Thyroid gland (tissue), 4 donors: ENCODE measurements at regions of chrX and their contacts with region 1.

Region 1: DNA sequence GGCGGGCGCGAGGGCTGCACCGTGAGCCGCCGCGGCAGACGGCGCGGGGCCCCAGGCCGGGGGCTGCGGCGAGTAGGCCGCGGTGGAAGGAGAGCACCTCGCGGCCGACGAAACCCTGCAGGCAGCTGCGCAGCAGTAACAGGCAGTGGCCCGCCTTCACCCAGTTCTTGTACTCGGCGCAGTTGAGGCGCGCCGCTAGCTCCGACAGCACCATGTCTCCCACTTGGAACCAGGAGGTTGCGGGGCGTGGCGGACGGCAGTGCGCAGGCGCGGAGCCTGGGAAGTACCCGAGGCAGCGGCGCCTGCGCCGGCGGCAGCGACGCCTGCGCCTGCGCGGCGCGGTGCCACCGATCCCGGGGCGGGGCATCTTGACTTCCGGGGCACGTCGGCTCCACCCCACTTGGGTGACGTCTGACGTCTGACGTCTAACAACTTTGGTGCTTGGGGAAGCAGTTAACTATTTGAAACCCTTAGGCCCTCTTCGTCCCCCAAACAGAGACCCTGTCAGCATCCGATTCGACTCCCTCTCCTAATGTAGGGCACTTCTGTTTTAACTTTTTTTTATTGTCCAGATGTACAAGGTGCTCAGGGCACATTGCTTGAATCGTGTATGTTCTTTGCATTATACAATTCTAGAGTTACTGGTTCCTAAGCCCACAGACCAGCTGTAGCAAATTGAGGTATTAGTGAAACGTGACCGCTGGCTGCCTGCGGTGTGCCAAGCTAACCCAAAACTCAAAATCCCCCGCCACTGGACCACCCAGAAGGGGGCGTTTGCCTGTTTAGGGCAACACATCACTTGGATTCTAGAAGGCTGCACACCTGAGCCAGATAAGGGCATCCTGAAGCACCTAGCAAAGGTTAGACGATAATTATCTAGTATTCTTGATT is at the start of gene CXorf38:
- DNase-seq: peak; percentile 88 to 89
- H3K4me3 ChIP-seq: peak within 1 kb of the TSS in 2 of 3 donors; percentile 66 to 79
- H3K27ac ChIP-seq: peak within 1 kb of the TSS; percentile 74 to 91 (median 80)
- H3K4me1 ChIP-seq: peaks cover 11 to 20% of the 10 kb centered on the region in 2 donors
- H3K27me3 ChIP-seq: no peaks in the 10 kb centered on the region
- CTCF ChIP-seq: no peak
- POLR2A ChIP-seq: peak; percentile 52 to 79
- total RNA-seq, gene CXorf38: 29.7 to 49.1 (median 42.2) TPM

Region 2: DNA sequence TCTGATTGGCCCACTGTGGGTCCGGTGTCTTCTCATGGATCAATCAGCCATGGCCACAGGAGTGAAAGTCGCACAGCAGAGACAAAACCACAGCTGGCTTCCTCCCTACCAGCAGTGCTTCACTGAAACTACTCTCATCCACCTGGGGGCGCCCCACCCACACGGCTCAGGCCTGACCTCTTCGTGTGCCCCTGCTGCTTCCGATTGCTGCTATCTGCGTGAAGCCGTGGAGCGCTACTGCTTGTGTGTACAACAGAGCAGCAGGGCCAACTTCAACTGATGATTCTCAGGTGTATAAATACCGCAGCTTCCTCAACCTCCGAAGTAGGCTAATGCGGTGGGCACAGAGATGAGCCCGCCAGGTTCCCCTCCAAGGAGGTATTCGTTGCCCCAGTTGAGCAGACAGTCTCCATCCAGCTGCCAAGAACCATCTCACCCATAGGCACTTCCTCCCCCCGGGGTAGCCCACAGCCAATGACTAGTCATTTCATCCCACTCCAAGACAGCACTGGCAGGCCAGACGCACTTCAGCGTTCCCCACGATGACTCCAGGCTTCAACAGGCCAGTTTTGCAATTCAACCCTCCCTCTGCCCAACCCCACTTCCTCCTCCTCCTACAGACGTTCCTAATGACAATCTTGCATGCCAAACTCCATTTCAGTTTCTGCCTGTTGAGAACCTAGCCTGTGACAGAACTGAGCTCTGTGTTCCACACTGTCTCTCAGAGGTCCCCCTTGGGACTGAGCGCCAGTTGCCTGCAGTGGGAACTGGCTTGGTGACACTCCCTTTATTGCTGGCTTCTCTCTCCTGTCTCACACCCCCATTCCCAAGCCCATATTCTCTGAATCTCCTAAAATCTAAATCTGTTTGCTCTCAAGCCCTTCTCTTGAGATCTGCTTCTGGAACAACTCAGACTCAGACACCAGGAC is 108.1 kb before region 1 on chrX:
- intact Hi-C with region 1: loop called (anchors 10 kb)
- DNase-seq: peak; percentile 78 to 82
- H3K4me3 ChIP-seq: no peak overlapping the region
- H3K27ac ChIP-seq: peak overlapping the region; percentile 41 to 81 (median 51)
- H3K4me1 ChIP-seq: peaks cover 11% of the 10 kb centered on the region in 2 donors
- H3K27me3 ChIP-seq: no peaks in the 10 kb centered on the region
- CTCF ChIP-seq: peak in 2 of 6 experiments; percentile 15 to 17
- POLR2A ChIP-seq: peak in 1 of 2 donors; percentile 15

Region 3: DNA sequence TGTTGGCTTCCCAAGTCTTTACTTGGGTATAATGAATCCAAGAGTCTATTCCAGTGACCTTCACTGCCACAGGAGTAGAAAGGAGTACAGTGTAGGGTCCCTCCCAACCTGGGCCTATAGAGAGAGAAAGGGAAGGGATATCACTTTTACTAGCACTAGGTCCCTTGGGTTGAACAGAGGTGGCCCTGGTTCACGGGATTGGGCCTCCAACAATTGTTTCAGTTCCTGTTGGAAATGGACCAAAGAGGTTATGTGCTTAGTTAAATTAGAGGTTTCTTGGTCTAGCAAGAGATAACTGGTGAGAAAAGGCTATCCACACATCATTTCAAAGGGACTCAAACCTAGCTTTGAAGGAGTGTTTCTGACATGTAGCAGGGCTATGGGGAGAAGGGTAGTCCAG is 144.9 kb after region 1 on chrX:
- intact Hi-C with region 1: loop called (anchors 10 kb)
- DNase-seq: no peak
- H3K4me3 ChIP-seq: no peak overlapping the region
- H3K27ac ChIP-seq: no peak overlapping the region
- H3K4me1 ChIP-seq: peaks cover 0 to 5% of the 10 kb centered on the region in 2 donors
- H3K27me3 ChIP-seq: no peaks in the 10 kb centered on the region
- CTCF ChIP-seq: no peak
- POLR2A ChIP-seq: no peak

Region 4: GRCh38 chrX:41116948-41117347 is 469.4 kb after region 1 on chrX:
- intact Hi-C with region 1: loop called (anchors 10 kb)
- DNase-seq: no peak
- H3K4me3 ChIP-seq: no peak overlapping the region
- H3K27ac ChIP-seq: no peak overlapping the region
- H3K4me1 ChIP-seq: peaks cover 5 to 11% of the 10 kb centered on the region in 2 donors
- H3K27me3 ChIP-seq: no peaks in the 10 kb centered on the region
- CTCF ChIP-seq: no peak
- POLR2A ChIP-seq: no peak

Region 5: DNA sequence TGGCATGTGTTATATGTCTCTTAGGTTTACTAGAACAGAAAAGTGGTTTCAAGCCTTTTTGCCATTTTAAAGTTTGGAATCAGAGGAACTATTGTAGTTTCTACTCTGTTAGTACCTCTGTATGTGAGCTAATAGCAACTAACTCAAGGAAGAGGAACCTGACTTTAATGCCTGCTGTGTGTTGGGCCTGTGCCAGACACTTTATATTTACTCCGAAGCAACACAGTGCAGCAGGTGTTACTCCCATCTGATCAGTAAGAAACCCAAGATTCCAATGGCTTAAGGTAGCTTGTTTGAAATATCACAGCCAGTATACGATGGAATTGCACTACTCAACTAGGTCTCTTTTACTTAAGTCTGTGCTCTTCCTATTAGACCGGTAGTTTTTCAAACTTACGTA is 516.9 kb after region 1 on chrX:
- intact Hi-C with region 1: no loop called
- DNase-seq: peak in 1 of 2 donors; percentile 11
- H3K4me3 ChIP-seq: no peak overlapping the region
- H3K27ac ChIP-seq: no peak overlapping the region
- H3K4me1 ChIP-seq: no peaks in the 10 kb centered on the region
- H3K27me3 ChIP-seq: no peaks in the 10 kb centered on the region
- CTCF ChIP-seq: no peak
- POLR2A ChIP-seq: no peak